ENCODE measurements at regions of chr3 and their contacts with region 1.

Region 1: DNA sequence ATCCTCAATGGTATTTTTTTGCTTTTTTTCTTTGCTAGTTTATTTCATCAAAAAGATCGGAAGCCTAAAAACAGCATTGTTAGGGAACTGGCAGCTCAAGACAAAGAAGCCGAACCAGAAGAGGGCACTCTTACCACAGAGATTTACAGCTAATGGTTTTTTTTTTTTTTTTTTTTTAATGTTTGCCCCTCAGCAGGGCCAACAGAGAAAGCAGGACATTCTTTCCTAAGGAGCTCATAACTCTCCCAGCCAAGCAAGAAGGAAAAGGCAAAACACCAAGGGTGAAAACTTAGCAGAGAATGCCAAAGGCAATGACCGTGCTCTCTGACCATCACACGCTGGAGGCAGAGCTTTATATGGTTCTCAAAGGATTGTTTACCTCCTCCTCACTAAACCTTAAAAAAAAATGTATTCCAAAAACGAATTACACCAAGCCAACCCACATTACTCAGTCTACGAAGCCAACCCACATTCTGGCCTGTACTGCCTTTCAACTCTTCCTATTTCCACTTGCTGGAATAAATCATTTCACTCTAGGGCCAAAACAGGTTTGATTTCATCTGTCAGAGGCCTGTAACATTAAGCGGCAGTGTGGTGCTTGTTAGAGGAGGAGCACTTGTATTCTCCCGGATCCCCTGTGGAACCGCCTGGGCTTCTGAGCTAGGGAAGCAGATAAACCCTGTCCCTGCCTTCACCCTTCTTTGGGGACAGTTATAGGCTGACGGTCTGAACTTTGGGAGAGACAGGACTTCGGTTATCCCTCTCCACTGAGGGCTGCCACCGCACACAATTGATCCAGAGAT is 35.6 kb upstream of the GYG1 start:
- DNase-seq: peak; percentile 67
- H3K4me3 ChIP-seq: no peak overlapping the region
- H3K27ac ChIP-seq: peak overlapping the region; percentile 79 to 82
- H3K4me1 ChIP-seq: no peaks in the 10 kb centered on the region
- H3K27me3 ChIP-seq: no peaks in the 10 kb centered on the region
- CTCF ChIP-seq: peak in 3 of 4 experiments; percentile 53 to 59 (median 58)
- POLR2A ChIP-seq: no peak

Region 2: DNA sequence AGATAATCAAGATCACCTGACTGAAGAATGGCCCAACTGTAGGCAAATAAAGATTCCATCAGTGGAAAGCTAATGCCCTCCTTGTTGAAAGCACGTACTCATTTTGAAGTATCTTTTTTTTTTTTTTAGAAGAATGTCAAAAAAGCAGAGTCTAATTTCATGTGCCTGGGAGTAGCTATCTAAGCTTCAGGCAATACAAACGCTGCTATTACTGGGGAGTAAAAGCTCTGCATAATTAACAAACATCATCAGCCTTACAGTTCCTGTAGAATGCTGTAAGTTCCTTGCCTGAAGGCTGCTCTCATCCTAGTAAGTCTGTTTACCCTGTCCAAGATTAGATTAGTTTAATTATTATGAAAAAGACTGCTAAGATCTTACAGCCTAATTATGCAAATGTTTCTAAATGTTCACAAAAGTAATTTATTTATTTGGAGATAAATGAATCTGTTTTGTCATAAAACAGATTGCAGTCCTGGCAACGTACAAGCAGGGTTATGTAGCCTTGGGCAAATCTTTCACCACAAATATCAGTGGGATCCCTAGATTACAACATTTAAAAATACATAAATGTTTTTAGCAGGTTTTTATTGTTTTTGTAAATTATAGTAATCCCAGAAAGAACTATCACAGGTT is 709.3 kb before region 1 on chr3:
- intact Hi-C with region 1: no loop called
- DNase-seq: no peak
- H3K4me3 ChIP-seq: no peak overlapping the region
- H3K27ac ChIP-seq: no peak overlapping the region
- H3K4me1 ChIP-seq: no peaks in the 10 kb centered on the region
- H3K27me3 ChIP-seq: no peaks in the 10 kb centered on the region
- CTCF ChIP-seq: no peak
- POLR2A ChIP-seq: no peak

Region 3: GRCh38 chr3:148718982-148719862 is 236.5 kb before region 1 on chr3:
- intact Hi-C with region 1: no loop called
- DNase-seq: no peak
- H3K4me3 ChIP-seq: no peak overlapping the region
- H3K27ac ChIP-seq: no peak overlapping the region
- H3K4me1 ChIP-seq: no peaks in the 10 kb centered on the region
- H3K27me3 ChIP-seq: no peaks in the 10 kb centered on the region
- CTCF ChIP-seq: peak in 3 of 4 experiments; percentile 36 to 46 (median 39)
- POLR2A ChIP-seq: no peak

Region 4: GRCh38 chr3:149009732-149010131 is 54.0 kb after region 1 on chr3:
- intact Hi-C with region 1: loop called (anchors 5 kb)
- DNase-seq: no peak
- H3K4me3 ChIP-seq: no peak overlapping the region
- H3K27ac ChIP-seq: no peak overlapping the region
- H3K4me1 ChIP-seq: no peaks in the 10 kb centered on the region
- H3K27me3 ChIP-seq: no peaks in the 10 kb centered on the region
- CTCF ChIP-seq: no peak
- POLR2A ChIP-seq: no peak

Region 5: GRCh38 chr3:149114458-149114857 is 158.7 kb after region 1 on chr3:
- intact Hi-C with region 1: no loop called
- DNase-seq: no peak
- H3K4me3 ChIP-seq: no peak overlapping the region
- H3K27ac ChIP-seq: no peak overlapping the region
- H3K4me1 ChIP-seq: no peaks in the 10 kb centered on the region
- H3K27me3 ChIP-seq: no peaks in the 10 kb centered on the region
- CTCF ChIP-seq: no peak
- POLR2A ChIP-seq: no peak

Region 6: DNA sequence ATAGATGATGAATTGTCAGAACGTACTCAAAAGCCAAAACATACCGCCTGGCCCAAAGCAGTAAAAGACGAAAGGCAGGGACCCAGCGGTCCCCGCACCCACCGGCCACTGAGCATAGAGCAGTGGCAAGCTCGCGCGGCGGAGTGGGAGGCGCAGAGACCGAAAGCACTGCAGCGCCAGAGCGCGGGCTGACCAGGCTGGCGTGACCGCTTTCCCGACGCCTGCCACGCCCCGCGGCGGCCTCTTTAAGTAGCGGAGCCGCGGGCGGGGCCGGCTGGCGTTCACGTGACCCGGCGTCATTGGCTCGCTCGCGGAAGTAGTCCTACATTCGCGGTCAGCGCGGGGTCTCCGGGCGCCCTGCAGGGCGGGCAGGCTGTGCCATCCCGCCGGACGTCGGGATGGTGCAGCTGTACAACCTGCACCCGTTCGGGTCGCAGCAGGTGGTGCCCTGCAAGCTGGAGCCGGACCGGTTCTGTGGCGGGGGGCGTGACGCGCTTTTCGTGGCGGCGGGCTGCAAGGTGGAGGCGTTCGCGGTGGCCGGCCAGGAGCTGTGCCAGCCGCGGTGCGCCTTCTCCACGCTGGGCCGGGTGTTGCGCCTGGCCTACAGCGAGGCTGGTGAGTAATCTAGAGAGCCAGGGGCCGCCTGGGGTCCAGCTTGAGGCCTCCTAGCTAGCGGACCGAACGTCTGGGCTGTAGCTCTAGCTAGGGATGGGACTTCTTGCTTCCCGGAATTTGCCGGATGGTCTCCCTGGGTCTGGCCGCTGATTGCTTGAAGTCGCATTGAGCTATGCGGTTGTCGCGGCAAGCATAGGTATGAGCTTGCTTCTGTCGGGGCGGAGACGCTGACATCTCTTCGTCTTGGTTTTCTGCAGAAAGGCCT is 173.8 kb after region 1 on chr3 and contains the start of gene HPS3:
- intact Hi-C with region 1: loop called (anchors 5 kb)
- DNase-seq: peak; percentile 89
- H3K4me3 ChIP-seq: peak within 1 kb of the TSS; percentile 96
- H3K27ac ChIP-seq: peak within 1 kb of the TSS; percentile 78 to 84
- H3K4me1 ChIP-seq: no peaks in the 10 kb centered on the region
- H3K27me3 ChIP-seq: no peaks in the 10 kb centered on the region
- CTCF ChIP-seq: peak in 2 of 4 experiments; percentile 17 to 28
- POLR2A ChIP-seq: peak; percentile 98
- total RNA-seq, gene HPS3: 17.6 to 25.2 TPM

Region 7: DNA sequence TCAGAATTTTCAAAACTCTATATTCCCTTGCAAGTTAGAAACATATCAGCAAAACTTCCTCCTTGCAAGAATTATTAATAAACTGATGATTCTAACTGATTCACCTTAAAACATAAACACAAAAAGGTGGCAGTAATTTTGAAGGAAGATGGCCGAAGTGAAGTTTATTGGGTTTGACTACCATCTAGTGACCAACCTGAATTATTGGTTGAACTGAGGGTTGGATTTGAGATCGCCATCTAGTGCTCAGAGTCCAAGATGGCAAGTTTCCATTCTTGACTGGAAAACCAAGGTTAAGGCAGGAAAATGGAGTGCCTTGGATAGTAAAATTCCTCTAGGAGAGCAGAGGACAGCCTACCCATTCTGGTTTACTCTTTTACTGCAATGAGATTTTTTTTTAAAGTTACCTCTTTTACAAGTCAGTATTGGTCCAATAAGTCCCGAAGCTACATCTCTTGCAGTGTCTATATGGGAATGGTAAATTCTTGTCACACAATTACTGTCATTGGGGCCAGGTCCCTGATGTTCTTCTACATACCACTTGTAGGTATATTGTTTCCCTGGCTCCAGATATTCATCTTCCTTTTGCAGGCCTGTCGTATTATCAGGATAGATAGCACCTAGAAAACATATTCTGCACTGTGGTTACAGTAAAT is 317.5 kb after region 1 on chr3:
- intact Hi-C with region 1: loop called (anchors 2 kb)
- DNase-seq: peak; percentile 51
- H3K4me3 ChIP-seq: no peak overlapping the region
- H3K27ac ChIP-seq: no peak overlapping the region
- H3K4me1 ChIP-seq: no peaks in the 10 kb centered on the region
- H3K27me3 ChIP-seq: no peaks in the 10 kb centered on the region
- CTCF ChIP-seq: peak; percentile 88 to 96 (median 94)
- POLR2A ChIP-seq: no peak

Region 8: GRCh38 chr3:149424918-149425317 is 469.2 kb after region 1 on chr3:
- intact Hi-C with region 1: no loop called
- DNase-seq: no peak
- H3K4me3 ChIP-seq: no peak overlapping the region
- H3K27ac ChIP-seq: no peak overlapping the region
- H3K4me1 ChIP-seq: no peaks in the 10 kb centered on the region
- H3K27me3 ChIP-seq: no peaks in the 10 kb centered on the region
- CTCF ChIP-seq: no peak
- POLR2A ChIP-seq: no peak

Region 9: DNA sequence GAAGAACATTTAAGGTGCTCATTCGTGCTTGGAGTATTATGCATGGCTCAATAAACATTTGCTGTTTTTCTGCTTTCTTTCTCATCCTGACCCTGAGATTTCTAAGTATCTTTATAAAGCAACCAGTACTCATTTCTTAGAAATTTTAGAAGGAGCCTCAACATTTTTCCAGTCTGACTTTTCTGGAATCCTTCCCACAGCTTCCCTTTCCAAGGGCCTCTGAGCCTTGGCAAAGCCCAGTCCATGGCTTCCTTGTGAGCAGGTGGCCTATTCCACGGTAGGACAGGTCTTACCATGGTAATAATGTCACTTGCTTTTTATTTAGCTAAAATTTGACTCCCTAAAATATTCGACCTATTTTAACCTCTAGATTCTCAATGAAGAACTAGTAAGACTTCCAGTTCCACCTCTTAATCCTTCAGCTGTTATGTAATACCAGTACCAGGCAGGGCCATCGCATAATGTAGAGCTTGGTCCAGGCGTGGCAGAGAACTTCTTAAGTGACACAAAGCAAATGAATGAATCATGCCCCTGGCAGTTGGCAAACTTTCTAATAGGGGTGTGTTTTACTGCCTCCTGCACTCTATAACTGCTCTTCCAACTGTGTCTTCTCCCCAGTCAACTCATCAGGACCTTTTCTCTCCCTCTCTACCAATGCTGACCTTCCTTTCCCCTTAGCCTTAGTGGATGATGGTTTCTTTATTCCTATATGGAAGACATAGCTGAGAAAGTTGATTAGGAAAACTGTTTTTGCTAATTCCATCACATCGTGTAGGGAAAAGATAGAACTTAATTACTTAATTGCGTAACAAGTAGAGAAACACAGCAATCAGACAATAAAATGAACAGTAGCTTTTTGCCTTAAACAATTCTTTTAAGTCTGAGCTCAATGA is 517.9 kb after region 1 on chr3:
- intact Hi-C with region 1: loop called (anchors 10 kb)
- DNase-seq: peak; percentile 79
- H3K4me3 ChIP-seq: no peak overlapping the region
- H3K27ac ChIP-seq: no peak overlapping the region
- H3K4me1 ChIP-seq: no peaks in the 10 kb centered on the region
- H3K27me3 ChIP-seq: no peaks in the 10 kb centered on the region
- CTCF ChIP-seq: no peak
- POLR2A ChIP-seq: no peak

Region 10: DNA sequence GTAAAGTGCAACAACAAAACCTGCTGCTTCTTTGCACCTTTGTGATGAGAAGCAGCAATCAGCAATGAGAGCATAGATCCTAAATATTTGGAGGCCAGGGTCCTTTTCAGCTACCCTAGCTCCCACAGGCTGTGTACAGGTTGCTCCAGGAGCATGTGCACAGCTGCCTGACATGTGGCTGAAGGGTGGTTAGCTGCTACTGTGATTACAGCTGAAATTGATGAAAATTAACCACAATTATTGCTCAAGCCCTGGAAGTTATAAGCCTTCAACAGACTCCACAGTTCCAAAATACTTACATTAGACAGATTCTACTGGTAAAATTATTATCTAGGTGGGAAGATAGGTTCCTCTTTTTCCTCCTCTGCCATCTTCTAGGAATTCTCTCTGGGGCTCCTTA is 768.0 kb after region 1 on chr3:
- intact Hi-C with region 1: loop called (anchors 5 kb)
- DNase-seq: no peak
- H3K4me3 ChIP-seq: no peak overlapping the region
- H3K27ac ChIP-seq: no peak overlapping the region
- H3K4me1 ChIP-seq: no peaks in the 10 kb centered on the region
- H3K27me3 ChIP-seq: no peaks in the 10 kb centered on the region
- CTCF ChIP-seq: no peak
- POLR2A ChIP-seq: no peak